Head of caudate nucleus (tissue), 42 donors: ENCODE measurements at regions of chr19 and their contacts with region 1.

Region 1: DNA sequence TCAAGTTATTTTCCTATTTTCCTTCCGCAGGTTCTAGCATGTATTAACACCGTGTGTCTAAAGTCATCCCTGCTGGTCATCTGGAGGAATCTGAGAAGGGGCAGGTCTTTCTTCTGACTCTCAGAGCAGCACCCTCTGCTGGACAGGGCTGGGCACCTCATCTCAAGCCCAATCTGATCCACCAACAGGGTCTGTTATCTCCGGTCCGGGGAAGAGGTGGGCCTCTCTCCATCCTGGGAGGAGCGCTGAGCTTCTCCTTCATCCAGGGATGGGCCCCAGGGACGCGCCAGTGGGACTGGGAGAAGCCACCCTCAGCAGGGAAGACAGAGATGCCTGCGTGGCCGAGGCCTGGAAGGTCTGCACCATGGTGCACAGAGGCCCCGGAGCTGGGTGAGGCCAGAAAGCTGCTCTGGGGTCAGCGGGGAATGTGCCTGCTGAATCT is 26.0 kb upstream of the ZNF331 start:
- DNase-seq: peak in 40 of 42 donors; percentile 12 to 81 (median 47)

Region 2: GRCh38 chr19:53195265-53195903 is 316.6 kb before region 1 on chr19:
- intact Hi-C with region 1: loop called (anchors 10 kb)
- DNase-seq: peak; percentile 36 to 93 (median 82)

Region 3: GRCh38 chr19:53294786-53295441 is 217.0 kb before region 1 on chr19:
- intact Hi-C with region 1: no loop called
- DNase-seq: no peak

Region 4: GRCh38 chr19:53424968-53425597 is 86.9 kb before region 1 on chr19:
- intact Hi-C with region 1: loop called (anchors 5 kb)
- DNase-seq: peak; percentile 69 to 93 (median 84)